ENCODE measurements at regions of chr1 and their contacts with region 1.

Region 1: DNA sequence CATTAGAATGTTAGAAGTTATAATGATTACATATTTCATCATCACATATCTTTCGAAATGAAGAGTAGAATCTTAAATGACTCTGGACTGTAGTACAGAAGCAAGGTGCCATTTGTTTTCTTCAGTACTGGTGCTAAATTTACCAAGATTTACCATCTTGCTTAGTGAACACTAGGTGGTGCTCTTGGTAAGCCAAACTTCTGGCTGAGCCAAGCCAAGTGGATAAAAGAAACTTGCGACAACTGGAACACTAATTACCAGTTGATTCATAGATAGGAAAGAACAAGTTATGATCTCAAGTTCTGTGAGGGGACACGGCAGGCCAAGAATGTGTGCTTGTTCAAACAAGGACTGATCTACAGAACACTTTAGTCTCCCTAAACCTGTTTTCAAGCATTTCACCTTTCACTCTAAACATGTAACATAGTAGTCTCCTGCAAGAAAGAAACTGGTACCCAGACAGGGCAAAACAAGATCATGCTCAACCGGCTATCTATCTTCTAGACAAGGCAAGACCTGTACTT is 19.8 kb downstream of the SPRTN start:
- DNase-seq: peak; percentile 79
- ATAC-seq: peak; percentile 91
- H3K4me3 ChIP-seq: no peak overlapping the region
- H3K27ac ChIP-seq: no peak overlapping the region
- H3K4me1 ChIP-seq: no peaks in the 10 kb centered on the region
- H3K27me3 ChIP-seq: no peaks in the 10 kb centered on the region
- CTCF ChIP-seq: peak; percentile 96

Region 2: GRCh38 chr1:231072502-231073094 is 285.3 kb before region 1 on chr1:
- CTCF ChIA-PET with region 1: no interaction called
- POLR2A ChIA-PET with region 1: no interaction called
- intact Hi-C with region 1: no loop called
- DNase-seq: no peak
- ATAC-seq: no peak
- H3K4me3 ChIP-seq: no peak overlapping the region
- H3K27ac ChIP-seq: no peak overlapping the region
- H3K4me1 ChIP-seq: 0 out of 2 replicates have a peak, but pooled peaks cover 5% of the 10 kb centered on the region
- H3K27me3 ChIP-seq: peaks cover 25% of the 10 kb centered on the region
- CTCF ChIP-seq: no peak

Region 3: DNA sequence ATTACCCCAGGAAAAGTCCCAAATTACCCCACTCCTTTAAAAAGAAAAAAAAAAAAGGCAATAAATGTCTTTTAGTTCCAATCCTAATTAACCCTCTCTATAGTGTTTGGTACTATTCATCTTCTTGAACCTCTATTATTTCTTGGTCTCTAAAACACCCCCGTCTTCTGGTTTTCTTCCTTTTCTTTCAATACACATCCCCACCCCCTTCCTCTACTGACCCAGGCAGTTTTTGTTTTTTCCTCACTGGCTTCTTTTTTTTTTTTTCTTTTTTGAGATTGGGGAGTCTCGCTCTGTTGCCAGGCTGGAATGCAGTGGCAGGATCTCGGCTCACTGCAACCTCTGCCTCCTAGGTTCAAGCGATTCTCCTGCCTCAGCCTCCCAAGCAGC is 38.1 kb after region 1 on chr1:
- CTCF ChIA-PET with region 1: no interaction called
- POLR2A ChIA-PET with region 1: no interaction called
- intact Hi-C with region 1: no loop called
- DNase-seq: no peak
- ATAC-seq: no peak
- H3K4me3 ChIP-seq: no peak overlapping the region; the same call in 1 of the 2 replicates
- H3K27ac ChIP-seq: peak overlapping the region; percentile 88
- H3K4me1 ChIP-seq: peaks cover 31% of the 10 kb centered on the region
- H3K27me3 ChIP-seq: no peaks in the 10 kb centered on the region
- CTCF ChIP-seq: no peak

Region 4: GRCh38 chr1:231550448-231550781 is 192.5 kb after region 1 on chr1:
- CTCF ChIA-PET with region 1: interaction called, 8 read pairs
- POLR2A ChIA-PET with region 1: interaction called, 4 read pairs
- intact Hi-C with region 1: loop called (anchors 1 kb)
- DNase-seq: peak; percentile 58
- ATAC-seq: peak; percentile 76
- H3K4me3 ChIP-seq: no peak overlapping the region
- H3K27ac ChIP-seq: no peak overlapping the region
- H3K4me1 ChIP-seq: no peaks in the 10 kb centered on the region
- H3K27me3 ChIP-seq: no peaks in the 10 kb centered on the region
- CTCF ChIP-seq: peak; percentile 86

Region 5: GRCh38 chr1:231584124-231584523 is 226.2 kb after region 1 on chr1:
- CTCF ChIA-PET with region 1: interaction called, 5 read pairs
- POLR2A ChIA-PET with region 1: no interaction called
- intact Hi-C with region 1: loop called (anchors 1 kb)
- DNase-seq: peak; percentile 86
- ATAC-seq: peak; percentile 99
- H3K4me3 ChIP-seq: no peak overlapping the region
- H3K27ac ChIP-seq: peak overlapping the region; percentile 21; the same call in 1 of the 2 replicates
- H3K4me1 ChIP-seq: peaks cover 4% of the 10 kb centered on the region
- H3K27me3 ChIP-seq: no peaks in the 10 kb centered on the region
- CTCF ChIP-seq: peak; percentile 71

Region 6: DNA sequence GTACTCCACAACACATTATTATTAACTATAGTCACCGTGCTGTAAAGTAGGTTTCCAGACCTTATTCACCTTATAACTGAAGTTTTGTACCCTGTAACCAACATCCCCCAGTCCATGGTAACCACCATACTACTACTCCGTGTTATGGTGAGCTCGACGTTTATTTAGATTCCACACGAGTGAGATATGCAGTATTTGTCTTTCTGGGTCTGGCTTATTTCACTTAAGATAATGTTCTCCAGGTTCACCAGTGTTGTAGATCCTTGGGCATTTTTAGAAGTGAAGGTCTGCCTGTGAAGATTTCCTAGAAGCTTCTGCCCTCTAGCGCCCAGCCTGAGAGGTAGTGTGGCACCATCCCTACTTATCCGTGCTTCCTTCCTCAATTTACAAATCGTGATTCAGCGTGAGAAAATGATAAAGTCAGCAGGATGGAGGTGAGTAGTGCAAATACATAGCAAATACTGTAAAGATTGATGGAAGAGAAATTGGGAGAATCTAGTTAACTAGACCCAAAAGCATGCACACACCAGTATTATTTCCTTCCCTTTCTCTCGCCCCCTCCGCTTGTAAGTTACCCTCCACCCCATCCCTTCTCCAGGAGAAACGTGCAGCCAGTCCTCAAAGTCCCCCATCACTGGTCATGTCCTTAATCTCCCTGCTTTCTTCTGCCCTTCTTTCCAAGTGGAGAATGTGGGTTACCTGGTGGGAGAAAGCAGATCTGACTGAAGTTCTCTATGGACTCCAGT is 232.7 kb after region 1 on chr1:
- CTCF ChIA-PET with region 1: no interaction called
- POLR2A ChIA-PET with region 1: no interaction called
- intact Hi-C with region 1: loop called (anchors 1 kb)
- DNase-seq: peak; percentile 81
- ATAC-seq: peak; percentile 99
- H3K4me3 ChIP-seq: no peak overlapping the region
- H3K27ac ChIP-seq: no peak overlapping the region
- H3K4me1 ChIP-seq: peaks cover 3% of the 10 kb centered on the region; the same call in 1 of the 2 replicates
- H3K27me3 ChIP-seq: no peaks in the 10 kb centered on the region
- CTCF ChIP-seq: peak; percentile 95

Measured in PC-3 (cell line).